Posterior cingulate gyrus (tissue), 11 donors: ENCODE measurements at regions of chr13 and their contacts with region 1.

Region 1: DNA sequence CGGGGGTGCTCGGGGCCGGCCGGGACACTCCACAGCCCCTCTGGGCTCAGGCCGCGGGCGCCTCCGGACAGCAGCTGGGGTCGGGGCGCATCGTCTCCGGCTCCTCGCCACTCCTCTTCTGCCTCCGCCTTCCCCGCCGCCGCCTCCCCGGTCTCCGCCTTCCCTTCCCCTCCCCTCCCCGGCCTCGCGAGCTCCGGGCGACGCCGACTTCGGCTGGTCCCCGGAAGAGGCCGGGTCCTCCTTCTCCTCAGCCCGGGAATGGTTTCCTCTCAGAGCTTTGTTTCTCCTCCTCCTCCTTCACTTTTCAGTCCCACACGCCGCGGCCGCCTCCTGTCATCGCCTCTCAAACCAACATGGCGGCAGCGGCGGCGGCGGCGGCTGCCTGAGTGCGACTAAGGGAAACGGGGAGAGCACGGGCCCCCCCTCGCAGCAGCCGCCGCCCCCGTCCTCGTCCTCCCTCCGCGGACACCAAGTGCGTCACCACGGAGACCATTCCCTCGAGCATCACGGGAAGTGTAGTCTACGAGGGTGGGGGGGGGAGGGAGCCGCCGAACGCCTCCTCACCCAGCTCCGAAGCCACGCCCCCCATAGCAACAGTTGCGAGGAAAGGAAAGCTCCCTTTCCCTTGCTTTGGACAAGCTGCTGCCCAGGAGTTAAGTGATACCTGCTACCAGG is at the start of gene UBL3:
- DNase-seq: peak; percentile 92 to 99 (median 96)

Region 2: GRCh38 chr13:29508130-29508875 is 342.1 kb before region 1 on chr13:
- intact Hi-C with region 1: loop called (anchors 5 kb)
- DNase-seq: peak; percentile 68 to 98 (median 90)

Region 3: DNA sequence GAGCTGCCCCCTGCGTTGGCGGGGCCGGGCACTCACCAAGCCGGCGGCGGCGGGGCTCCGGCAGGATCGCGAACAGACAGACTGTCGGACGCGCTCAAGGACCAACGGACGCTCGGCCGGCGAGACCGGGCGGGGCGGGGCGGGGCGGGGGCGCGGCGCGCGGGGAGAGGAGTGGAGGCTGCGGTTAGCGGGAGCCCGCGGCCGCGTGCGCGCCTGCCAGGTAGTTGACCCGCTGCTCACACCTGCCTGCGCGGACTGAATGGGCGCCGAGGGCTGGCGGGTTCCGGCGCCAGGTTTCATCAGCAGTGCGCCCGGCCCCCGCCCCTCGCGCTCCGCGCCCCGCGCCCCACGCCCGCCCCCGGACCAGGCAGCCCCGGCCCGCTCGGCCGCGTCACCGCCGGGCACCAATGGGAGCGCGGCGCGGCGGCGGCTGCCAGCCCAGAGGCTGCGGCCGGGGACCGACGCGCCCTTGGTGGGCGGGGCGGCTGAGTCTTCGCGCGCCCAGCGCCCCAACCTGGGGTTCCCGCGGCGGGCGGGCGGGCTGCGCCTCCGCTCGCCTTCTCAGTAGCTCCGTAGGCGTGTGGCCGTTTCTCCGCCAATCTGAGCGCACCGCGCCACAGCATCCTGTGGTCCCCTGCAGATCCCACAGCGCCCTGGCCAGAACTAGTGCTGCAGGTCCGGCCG is 254.8 kb before region 1 on chr13 and contains the start of gene SLC7A1:
- intact Hi-C with region 1: loop called (anchors 5 kb)
- DNase-seq: peak; percentile 44 to 96 (median 69)

Region 4: GRCh38 chr13:30388406-30389283 is 538.3 kb after region 1 on chr13:
- intact Hi-C with region 1: no loop called
- DNase-seq: no peak